ENCODE measurements at regions of chr18 and their contacts with region 1.

Region 1: GRCh38 chr18:4004183-4004829 is 450.8 kb downstream of the DLGAP1 start:
- DNase-seq: no peak
- H3K4me3 ChIP-seq: no peak overlapping the region
- H3K4me3 Mint-ChIP-seq: no peak overlapping the region
- H3K27ac ChIP-seq: no peak overlapping the region
- H3K27ac Mint-ChIP-seq: no peak overlapping the region
- H3K4me1 ChIP-seq: no peaks in the 10 kb centered on the region
- H3K4me1 Mint-ChIP-seq: no peaks in the 10 kb centered on the region
- H3K27me3 ChIP-seq: peaks cover 0 to 4% of the 10 kb centered on the region in 2 donors
- H3K27me3 Mint-ChIP-seq: peaks cover 7 to 16% (median 13%) of the 10 kb centered on the region in 3 donors
- CTCF ChIP-seq: no peak

Region 2: DNA sequence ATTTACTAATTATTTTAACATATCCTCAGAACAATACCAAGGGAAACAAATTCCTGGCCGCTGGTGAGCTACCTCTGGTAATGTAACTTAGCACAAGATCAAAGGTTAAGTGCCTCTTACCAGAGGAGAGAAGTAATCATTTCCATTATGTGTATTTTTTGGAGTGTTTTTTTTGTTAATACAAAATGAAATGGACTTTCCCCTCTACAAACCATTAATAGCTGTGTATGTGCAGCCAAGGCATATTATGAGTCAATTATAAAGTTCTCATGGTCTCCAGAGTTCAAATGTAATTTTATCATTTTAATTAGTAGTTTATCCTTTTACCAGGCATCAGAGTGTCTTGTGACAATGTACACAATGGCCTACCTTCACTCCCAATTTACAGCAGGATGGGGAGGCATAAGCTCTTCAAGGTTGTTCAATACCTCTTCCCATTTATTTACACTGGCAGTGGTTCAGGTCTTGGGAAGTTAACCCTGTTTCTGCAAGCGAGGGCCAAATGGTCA is 312.1 kb before region 1 on chr18:
- intact Hi-C with region 1: loop called in 1 of 2 experiments (anchors 10 kb)
- DNase-seq: no peak
- H3K4me3 ChIP-seq: no peak overlapping the region
- H3K4me3 Mint-ChIP-seq: no peak overlapping the region
- H3K27ac ChIP-seq: no peak overlapping the region
- H3K27ac Mint-ChIP-seq: no peak overlapping the region
- H3K4me1 ChIP-seq: peaks cover 16 to 17% of the 10 kb centered on the region in 2 donors
- H3K4me1 Mint-ChIP-seq: peaks cover 18% of the 10 kb centered on the region
- H3K27me3 ChIP-seq: no peaks in the 10 kb centered on the region
- H3K27me3 Mint-ChIP-seq: peaks cover 0 to 4% (median 3%) of the 10 kb centered on the region in 3 donors
- CTCF ChIP-seq: no peak

Region 3: DNA sequence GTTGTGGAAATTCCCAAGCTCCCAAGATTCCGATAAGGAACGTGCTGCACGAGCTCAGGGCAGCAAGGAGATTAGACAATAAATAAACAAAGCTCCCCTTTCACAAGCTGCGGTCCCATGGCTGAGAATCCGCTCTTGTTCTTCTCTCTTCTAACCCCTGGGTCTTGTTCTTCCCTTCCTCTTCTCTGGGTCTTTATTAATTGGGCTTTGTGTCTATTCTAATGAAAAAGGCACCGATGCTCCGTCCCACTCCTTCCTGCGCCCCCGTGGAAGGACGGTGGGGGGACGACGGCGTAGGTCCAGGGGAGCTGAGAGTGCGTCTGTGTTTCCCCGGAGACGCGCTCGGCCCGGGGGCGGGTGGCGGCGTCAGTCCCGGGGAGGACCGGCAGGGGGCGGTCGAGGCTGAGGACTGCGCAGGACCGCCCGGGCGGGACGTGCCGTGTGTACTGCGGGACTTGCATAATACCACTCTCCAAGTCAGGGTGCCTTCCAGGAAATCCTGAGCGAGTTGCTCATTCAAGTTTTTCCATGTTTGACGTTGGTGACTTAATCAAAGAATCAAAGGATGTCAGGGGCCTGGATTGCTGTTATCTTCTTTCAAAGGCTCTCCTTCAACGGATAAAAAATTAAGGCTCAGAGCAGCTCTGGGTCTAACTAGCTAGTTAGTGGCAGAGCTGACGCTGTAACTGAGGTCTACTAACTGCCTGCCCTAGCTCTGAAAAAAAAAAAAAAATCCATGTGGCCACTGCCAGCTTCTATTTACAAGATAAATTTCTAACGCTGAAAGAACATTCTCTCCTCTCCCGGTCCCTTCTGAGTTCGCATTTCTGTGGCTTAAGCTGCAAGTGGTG is 233.0 kb before region 1 on chr18:
- intact Hi-C with region 1: loop called (anchors 10 kb)
- DNase-seq: peak; percentile 83 to 93 (median 91)
- H3K4me3 ChIP-seq: peak overlapping the region; percentile 3 to 64 (median 45)
- H3K4me3 Mint-ChIP-seq: peak overlapping the region; percentile 77 to 94
- H3K27ac ChIP-seq: no peak overlapping the region
- H3K27ac Mint-ChIP-seq: peak overlapping the region in 5 of 7 donors; percentile 19 to 83 (median 79)
- H3K4me1 ChIP-seq: peaks cover 9 to 13% of the 10 kb centered on the region in 2 donors
- H3K4me1 Mint-ChIP-seq: peaks cover 17% of the 10 kb centered on the region
- H3K27me3 ChIP-seq: peaks cover 2 to 6% of the 10 kb centered on the region in 2 donors
- H3K27me3 Mint-ChIP-seq: peaks cover 0 to 1% (median 0%) of the 10 kb centered on the region in 3 donors
- CTCF ChIP-seq: peak; percentile 98